PC-3 (cell line): ENCODE measurements at regions of chr5 and their contacts with region 1.

Region 1: GRCh38 chr5:17056056-17056690 is 120.1 kb upstream of the MYO10 start:
- DNase-seq: peak; percentile 79
- ATAC-seq: peak; percentile 53
- H3K4me3 ChIP-seq: no peak overlapping the region
- H3K27ac ChIP-seq: peak overlapping the region; percentile 68
- H3K4me1 ChIP-seq: peaks cover 37% of the 10 kb centered on the region
- H3K27me3 ChIP-seq: no peaks in the 10 kb centered on the region
- CTCF ChIP-seq: no peak

Region 2: DNA sequence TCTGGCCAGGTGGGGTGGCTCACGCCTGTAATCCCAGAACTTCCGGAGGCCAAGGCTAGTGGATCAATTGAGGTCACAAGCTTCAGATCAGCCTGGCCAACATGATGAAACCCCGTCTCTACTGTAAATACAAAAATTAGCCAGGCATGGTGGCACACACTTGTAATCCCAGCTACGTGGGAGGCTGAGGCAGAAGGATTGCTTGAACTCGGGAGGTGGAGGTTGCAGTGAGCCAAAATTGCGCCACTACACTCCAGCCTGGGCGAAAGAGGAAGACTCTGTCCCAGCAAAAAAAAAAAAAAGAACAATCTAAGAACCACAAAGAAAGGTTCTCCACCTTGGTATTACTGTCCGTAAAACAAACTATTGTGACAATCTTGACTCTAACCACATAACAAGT is 129.8 kb before region 1 on chr5:
- CTCF ChIA-PET with region 1: no interaction called
- POLR2A ChIA-PET with region 1: interaction called, 17 read pairs
- intact Hi-C with region 1: no loop called
- DNase-seq: no peak
- ATAC-seq: no peak
- H3K4me3 ChIP-seq: no peak overlapping the region
- H3K27ac ChIP-seq: no peak overlapping the region
- H3K4me1 ChIP-seq: peaks cover 5% of the 10 kb centered on the region; the same call in 1 of the 2 replicates
- H3K27me3 ChIP-seq: no peaks in the 10 kb centered on the region
- CTCF ChIP-seq: no peak

Region 3: DNA sequence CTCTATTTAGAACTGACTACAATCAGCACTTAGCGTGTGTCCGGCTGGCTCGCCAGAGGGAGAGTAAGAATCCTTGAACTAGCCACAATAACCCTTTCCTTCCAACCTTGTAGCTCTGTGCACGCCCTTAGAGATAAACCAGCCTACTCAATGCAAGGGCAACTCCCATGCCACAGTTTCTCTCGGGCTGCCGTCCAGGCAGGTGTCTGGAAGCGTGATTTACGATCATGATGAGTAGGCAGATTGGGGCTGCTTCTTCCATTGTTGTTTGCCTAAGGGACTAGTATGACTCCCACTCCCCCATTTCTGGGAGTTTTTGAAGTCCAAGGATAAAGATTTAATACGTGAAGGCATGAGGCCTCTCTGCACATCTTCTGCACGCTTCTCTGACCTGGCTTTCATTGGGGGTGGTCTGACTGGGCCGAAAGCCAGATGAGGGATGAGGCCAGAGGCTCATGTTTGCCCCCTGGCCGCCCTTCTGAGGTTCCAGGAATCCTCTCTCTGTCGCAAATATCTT is 13.9 kb after region 1 on chr5:
- CTCF ChIA-PET with region 1: interaction called, 11 read pairs
- POLR2A ChIA-PET with region 1: no interaction called
- intact Hi-C with region 1: no loop called
- DNase-seq: peak; percentile 97
- ATAC-seq: peak; percentile 48
- H3K4me3 ChIP-seq: no peak overlapping the region
- H3K27ac ChIP-seq: peak overlapping the region; percentile 12
- H3K4me1 ChIP-seq: peaks cover 27% of the 10 kb centered on the region
- H3K27me3 ChIP-seq: no peaks in the 10 kb centered on the region
- CTCF ChIP-seq: no peak

Region 4: DNA sequence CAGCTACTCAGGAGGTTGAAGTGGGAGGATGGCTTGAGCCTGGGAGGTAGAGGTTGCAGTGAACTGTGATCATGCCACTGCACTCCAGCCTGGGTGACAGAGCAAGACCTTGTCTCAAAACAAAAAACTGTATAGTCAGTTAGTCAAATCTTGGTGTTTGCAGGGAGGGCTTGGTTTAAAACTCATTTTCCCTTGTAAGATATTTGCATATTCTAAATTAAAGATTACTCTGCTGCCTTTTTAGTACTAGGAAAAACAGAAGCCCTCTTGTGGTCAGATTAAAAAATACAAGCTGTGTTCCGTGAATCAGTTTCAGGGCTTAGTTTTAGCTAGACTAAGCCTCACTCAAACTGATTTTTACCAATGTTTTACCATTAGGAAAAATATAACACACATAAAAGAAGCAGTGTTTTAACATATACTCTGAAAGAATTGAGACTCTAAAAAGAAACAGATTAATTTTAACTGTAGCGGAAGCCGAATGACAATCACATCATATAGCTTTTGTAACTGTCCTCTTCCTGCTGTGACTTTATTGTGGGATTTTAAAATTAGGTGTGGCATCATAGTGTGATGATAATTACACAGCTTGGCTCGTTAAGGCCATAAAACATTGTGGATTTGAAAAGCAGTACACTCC is 76.4 kb after region 1 on chr5:
- CTCF ChIA-PET with region 1: no interaction called
- POLR2A ChIA-PET with region 1: interaction called, 3 read pairs
- intact Hi-C with region 1: loop called (anchors 2 kb)
- DNase-seq: peak; percentile 88
- ATAC-seq: no peak
- H3K4me3 ChIP-seq: no peak overlapping the region
- H3K27ac ChIP-seq: no peak overlapping the region
- H3K4me1 ChIP-seq: peaks cover 27% of the 10 kb centered on the region
- H3K27me3 ChIP-seq: no peaks in the 10 kb centered on the region
- CTCF ChIP-seq: peak; percentile 94

Region 5: GRCh38 chr5:17477573-17478265 is 421.5 kb after region 1 on chr5:
- CTCF ChIA-PET with region 1: no interaction called
- POLR2A ChIA-PET with region 1: no interaction called
- intact Hi-C with region 1: no loop called
- DNase-seq: no peak
- ATAC-seq: no peak
- H3K4me3 ChIP-seq: no peak overlapping the region
- H3K27ac ChIP-seq: no peak overlapping the region
- H3K4me1 ChIP-seq: no peaks in the 10 kb centered on the region
- H3K27me3 ChIP-seq: no peaks in the 10 kb centered on the region
- CTCF ChIP-seq: no peak